ENCODE measurements at regions of chr9 and their contacts with region 1.

Region 1: DNA sequence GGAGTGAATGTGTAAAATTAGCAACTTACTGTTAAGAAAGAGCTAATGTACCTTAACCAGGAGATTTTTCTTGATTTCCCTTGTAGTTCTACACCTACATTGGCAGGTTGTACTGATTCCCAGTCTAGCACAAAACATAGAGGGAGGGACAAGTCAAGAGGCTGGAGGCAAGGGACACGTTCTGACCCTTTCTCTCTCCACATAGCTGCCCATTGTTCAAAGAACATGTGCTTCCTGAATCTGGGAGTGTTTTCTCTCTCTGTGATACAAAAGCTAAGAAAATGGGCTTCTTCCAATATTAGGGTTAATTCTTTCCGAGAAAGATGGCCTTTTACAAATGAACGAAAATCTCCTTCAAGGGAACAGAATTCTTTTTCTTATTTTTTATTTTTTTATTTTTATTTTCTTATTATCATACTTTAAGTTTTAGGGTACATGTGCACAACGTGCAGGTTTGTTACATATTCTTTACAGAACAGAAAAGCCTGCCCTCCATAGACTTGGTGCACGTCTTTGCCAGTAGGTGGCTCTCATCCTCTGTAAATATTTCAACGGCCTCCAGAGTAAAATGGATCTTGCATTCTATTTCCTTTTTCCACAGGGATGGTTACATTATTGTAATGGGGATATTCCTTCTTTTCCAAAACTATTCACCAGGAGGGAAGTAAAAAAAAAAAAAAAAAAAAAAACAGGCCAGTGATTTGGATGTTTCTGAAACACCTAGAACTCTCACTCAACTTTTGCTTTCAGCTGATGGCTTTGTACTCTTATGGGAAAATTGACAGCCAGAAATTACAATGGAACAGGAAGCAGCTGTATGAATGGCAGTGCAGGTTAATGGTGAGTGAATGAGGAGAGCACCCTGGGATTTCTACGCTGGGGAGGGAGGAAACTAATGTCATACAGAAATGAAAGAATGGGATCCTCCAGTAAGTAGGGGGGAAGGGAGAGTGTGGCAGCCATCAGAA is 13.1 kb upstream of the IFNA5 start:
- DNase-seq: peak; percentile 61
- H3K4me3 Mint-ChIP-seq: no peak overlapping the region
- H3K27ac Mint-ChIP-seq: no peak overlapping the region
- H3K4me1 Mint-ChIP-seq: peaks cover 4% of the 10 kb centered on the region
- H3K27me3 Mint-ChIP-seq: no peaks in the 10 kb centered on the region

Region 2: DNA sequence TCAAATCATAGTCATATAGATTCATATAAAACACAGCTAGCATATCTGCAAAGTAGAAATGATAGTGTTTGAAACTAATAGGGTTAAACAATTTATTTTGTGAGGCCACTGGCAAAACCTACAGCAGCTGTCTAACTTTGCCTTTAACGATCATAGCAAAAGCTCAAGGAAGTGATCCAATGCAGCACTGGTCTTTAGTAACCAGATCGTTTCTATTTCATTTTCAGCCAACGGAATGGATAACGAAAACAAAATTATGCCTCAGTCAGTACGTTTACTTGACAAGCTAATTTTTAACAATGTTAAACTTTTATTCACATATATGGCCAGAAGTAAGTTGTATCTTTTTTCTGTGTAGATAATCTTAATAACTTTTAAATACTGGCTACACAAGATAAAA is 713.7 kb before region 1 on chr9:
- CTCF ChIA-PET with region 1: no interaction called
- intact Hi-C with region 1: no loop called
- DNase-seq: no peak
- H3K4me3 Mint-ChIP-seq: peak overlapping the region; percentile 53
- H3K27ac Mint-ChIP-seq: no peak overlapping the region
- H3K4me1 Mint-ChIP-seq: peaks cover 72% of the 10 kb centered on the region
- H3K27me3 Mint-ChIP-seq: no peaks in the 10 kb centered on the region

Region 3: GRCh38 chr9:21228122-21228521 is 90.1 kb before region 1 on chr9 and contains the start of gene IFNA17:
- CTCF ChIA-PET with region 1: no interaction called
- intact Hi-C with region 1: no loop called
- DNase-seq: no peak
- H3K4me3 Mint-ChIP-seq: no peak within 1 kb of the TSS
- H3K27ac Mint-ChIP-seq: no peak within 1 kb of the TSS
- H3K4me1 Mint-ChIP-seq: no peaks in the 10 kb centered on the region
- H3K27me3 Mint-ChIP-seq: peaks cover 2% of the 10 kb centered on the region
- total RNA-seq, gene IFNA17: not detected

Region 4: DNA sequence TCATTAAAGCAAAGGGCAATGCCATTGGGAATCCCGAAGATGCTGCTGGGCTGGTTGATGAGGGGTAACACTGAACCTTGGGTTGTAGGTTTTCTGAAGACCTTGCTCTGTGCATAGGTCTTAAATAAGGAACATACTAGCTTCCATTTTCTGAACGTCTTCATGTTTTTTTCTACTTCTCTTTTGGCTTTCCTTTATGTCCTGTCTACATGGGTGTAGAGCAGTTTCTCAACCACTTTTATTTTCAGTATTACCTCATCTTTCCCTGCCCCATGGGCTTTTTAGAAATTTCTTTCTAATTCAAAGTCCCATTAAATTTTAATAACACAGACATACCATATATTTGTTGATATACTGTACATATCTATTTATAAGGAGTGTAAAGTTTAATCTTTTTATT is 78.3 kb before region 1 on chr9 and contains the start of gene IFNA14:
- CTCF ChIA-PET with region 1: interaction called, 6 read pairs
- intact Hi-C with region 1: loop called (anchors 5 kb)
- DNase-seq: no peak
- H3K4me3 Mint-ChIP-seq: no peak within 1 kb of the TSS
- H3K27ac Mint-ChIP-seq: no peak within 1 kb of the TSS
- H3K4me1 Mint-ChIP-seq: peaks cover 8% of the 10 kb centered on the region
- H3K27me3 Mint-ChIP-seq: peaks cover 2% of the 10 kb centered on the region
- total RNA-seq, gene IFNA14: not detected

Region 5: GRCh38 chr9:21252721-21253547 is 65.3 kb before region 1 on chr9:
- CTCF ChIA-PET with region 1: interaction called, 14 read pairs
- intact Hi-C with region 1: no loop called
- DNase-seq: peak; percentile 38
- H3K4me3 Mint-ChIP-seq: no peak overlapping the region
- H3K27ac Mint-ChIP-seq: no peak overlapping the region
- H3K4me1 Mint-ChIP-seq: peaks cover 4% of the 10 kb centered on the region
- H3K27me3 Mint-ChIP-seq: peaks cover 3% of the 10 kb centered on the region

Region 6: GRCh38 chr9:21334701-21335632 is 16.7 kb after region 1 on chr9 and contains the start of gene KLHL9:
- CTCF ChIA-PET with region 1: interaction called, 15 read pairs
- intact Hi-C with region 1: no loop called
- DNase-seq: peak; percentile 93
- H3K4me3 Mint-ChIP-seq: peak within 1 kb of the TSS; percentile 84
- H3K27ac Mint-ChIP-seq: peak within 1 kb of the TSS; percentile 91
- H3K4me1 Mint-ChIP-seq: peaks cover 48% of the 10 kb centered on the region
- H3K27me3 Mint-ChIP-seq: no peaks in the 10 kb centered on the region
- total RNA-seq, gene KLHL9: 17.5 to 18.3 TPM

Region 7: DNA sequence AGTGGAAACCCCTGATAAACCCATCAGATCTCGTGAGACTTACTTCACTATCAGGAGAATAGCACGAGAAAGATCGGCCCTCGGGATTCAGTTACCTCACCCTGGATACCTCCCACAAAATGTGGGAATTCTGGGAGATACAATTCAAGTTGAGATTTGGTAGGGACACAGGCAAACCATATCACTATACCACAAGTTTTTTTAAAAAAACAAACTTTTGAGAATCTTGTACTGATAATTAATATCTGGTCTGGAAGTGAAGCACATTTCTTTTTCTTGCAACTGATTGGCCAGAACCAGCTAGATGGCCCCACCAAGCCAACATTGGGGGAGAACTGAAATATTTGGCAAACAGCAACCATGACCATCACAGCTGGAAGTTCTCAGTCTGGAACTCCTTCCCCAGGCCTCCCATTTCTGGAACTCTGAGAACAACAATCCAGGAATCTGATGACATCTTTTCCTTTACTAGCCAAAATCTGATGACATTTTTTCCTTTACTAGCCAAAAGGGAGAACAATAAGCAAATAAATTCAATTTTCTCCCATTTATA is 742.7 kb after region 1 on chr9:
- CTCF ChIA-PET with region 1: no interaction called
- intact Hi-C with region 1: no loop called
- DNase-seq: no peak
- H3K4me3 Mint-ChIP-seq: no peak overlapping the region
- H3K27ac Mint-ChIP-seq: no peak overlapping the region
- H3K4me1 Mint-ChIP-seq: peaks cover 21% of the 10 kb centered on the region
- H3K27me3 Mint-ChIP-seq: peaks cover 21% of the 10 kb centered on the region